Activated T-helper 1 cell treated with anti-CD3 and anti-CD28 coated beads, Interleukin-12 subunit alpha, Interleukin-12 subunit beta, Interleukin-2, Interleukin-4 antibody, amounts not matched to agents 30 ng/mL and 10 ng/mL and 1 ng/mL, durations not matched to agents 14 hours and 24 hours and 36 hours (primary cell): ENCODE measurements at regions of chr6 and their contacts with region 1.

Region 1: DNA sequence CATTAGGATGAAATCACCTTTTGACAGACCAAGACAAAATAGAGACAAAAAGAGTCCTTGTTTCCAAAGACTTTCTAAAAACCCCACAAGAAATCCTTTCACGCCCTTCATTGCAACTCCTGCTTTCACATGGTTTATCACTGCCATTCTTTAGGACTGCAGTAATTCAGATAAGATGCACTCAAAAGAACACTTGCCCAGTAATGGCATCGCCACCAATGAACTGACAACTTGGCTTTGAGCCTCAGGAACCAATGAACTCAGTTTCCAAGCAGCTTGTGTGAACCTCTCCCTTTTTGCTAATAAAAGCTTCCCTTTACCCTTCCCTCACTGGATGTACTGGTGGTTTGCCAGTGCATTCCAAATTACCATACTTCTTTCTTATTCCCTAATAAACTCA is 21.8 kb downstream of the OSTM1 start:
- DNase-seq: no peak
- H3K4me3 Mint-ChIP-seq: no peak overlapping the region
- H3K27ac Mint-ChIP-seq: no peak overlapping the region
- H3K4me1 Mint-ChIP-seq: no peaks in the 10 kb centered on the region
- H3K27me3 Mint-ChIP-seq: no peaks in the 10 kb centered on the region

Region 2: GRCh38 chr6:107318100-107318736 is 734.5 kb before region 1 on chr6:
- intact Hi-C with region 1: loop called (anchors 5 kb)
- DNase-seq: no peak
- H3K4me3 Mint-ChIP-seq: no peak overlapping the region
- H3K27ac Mint-ChIP-seq: no peak overlapping the region
- H3K4me1 Mint-ChIP-seq: peaks cover 14% of the 10 kb centered on the region
- H3K27me3 Mint-ChIP-seq: no peaks in the 10 kb centered on the region

Region 3: DNA sequence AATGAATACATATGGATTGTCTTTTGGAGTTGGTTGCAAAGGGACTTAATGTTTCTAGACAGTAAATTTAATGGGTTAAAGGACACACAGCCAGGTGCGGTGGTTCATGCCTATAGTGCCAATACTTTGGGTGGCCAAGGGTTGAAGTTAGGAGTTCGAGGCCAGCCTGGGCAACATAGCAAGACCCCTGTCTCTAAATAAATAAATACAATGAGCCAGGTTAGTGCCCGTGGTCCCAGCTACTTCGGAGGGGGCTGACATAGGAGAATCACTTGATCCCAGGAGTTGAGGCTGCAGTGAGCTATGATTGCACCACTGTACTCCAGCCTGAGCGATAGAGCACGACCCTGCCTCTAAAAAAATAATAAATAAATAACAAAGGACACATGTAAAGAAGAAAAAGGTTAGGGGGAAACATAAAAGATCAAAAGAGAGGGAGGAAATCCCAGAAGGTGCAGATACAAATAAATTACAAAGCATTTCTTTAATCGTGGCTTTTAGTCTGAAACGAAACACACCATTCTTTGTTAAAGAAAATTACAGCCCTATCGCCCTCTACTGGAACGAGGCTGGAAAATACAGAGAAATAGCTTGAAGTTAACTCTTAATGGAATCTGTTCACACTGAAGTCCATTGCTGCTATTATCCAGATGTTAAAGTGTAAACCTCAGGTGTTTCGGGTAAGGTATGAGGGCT is 186.0 kb before region 1 on chr6:
- intact Hi-C with region 1: loop called (anchors 2 kb)
- DNase-seq: no peak
- H3K4me3 Mint-ChIP-seq: no peak overlapping the region
- H3K27ac Mint-ChIP-seq: no peak overlapping the region
- H3K4me1 Mint-ChIP-seq: peaks cover 24% of the 10 kb centered on the region
- H3K27me3 Mint-ChIP-seq: peaks cover 4% of the 10 kb centered on the region

Region 4: GRCh38 chr6:107964671-107965340 is 87.9 kb before region 1 on chr6:
- intact Hi-C with region 1: loop called (anchors 5 kb)
- DNase-seq: no peak
- H3K4me3 Mint-ChIP-seq: no peak overlapping the region
- H3K27ac Mint-ChIP-seq: peak overlapping the region; percentile 58
- H3K4me1 Mint-ChIP-seq: peaks cover 8% of the 10 kb centered on the region
- H3K27me3 Mint-ChIP-seq: peaks cover 2% of the 10 kb centered on the region

Region 5: GRCh38 chr6:107977283-107977682 is 75.4 kb before region 1 on chr6:
- intact Hi-C with region 1: loop called (anchors 1 kb)
- DNase-seq: no peak
- H3K4me3 Mint-ChIP-seq: no peak overlapping the region
- H3K27ac Mint-ChIP-seq: no peak overlapping the region
- H3K4me1 Mint-ChIP-seq: no peaks in the 10 kb centered on the region
- H3K27me3 Mint-ChIP-seq: peaks cover 9% of the 10 kb centered on the region

Region 6: DNA sequence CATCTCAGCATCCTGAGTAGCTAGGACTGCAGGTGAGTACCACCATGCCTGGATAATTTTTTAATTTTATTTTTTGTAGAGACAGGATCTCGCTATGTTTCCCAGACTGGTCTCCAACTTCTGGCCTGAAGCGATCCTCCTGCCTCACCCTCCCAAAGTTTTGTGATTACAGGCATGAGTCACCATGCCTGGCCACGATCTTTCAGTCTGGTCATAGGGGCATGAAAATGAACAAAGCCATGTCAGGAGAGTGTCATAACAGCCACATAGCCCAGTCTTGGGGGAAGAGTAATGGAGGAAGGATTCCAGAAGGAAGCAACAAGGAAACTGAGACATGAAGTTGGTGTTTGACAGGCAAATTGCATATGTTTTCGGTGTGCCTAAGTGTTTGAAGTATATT is 225.1 kb after region 1 on chr6:
- intact Hi-C with region 1: no loop called
- DNase-seq: no peak
- H3K4me3 Mint-ChIP-seq: no peak overlapping the region
- H3K27ac Mint-ChIP-seq: no peak overlapping the region
- H3K4me1 Mint-ChIP-seq: no peaks in the 10 kb centered on the region
- H3K27me3 Mint-ChIP-seq: peaks cover 13% of the 10 kb centered on the region

Region 7: DNA sequence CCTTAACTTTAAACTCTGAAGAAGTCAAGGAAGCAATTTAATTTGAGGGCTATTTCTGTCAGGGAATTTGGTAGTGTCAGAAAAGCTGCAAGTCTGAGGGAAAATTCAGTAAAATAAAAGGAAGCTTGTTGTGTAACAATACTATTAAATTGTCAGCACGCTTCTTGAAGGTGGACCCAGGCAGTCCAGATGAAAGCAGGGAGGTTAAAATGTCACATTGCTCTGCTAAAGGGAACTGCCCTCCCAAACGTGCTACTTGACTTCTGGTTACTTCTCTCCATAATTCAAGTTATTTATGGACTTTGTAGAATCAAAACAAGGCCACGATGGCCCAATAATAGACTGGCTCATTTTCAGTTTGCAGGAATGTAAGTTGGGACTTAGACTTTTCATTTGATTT is 767.3 kb after region 1 on chr6:
- intact Hi-C with region 1: no loop called
- DNase-seq: no peak
- H3K4me3 Mint-ChIP-seq: no peak overlapping the region
- H3K27ac Mint-ChIP-seq: no peak overlapping the region
- H3K4me1 Mint-ChIP-seq: no peaks in the 10 kb centered on the region
- H3K27me3 Mint-ChIP-seq: peaks cover 23% of the 10 kb centered on the region

Region 8: GRCh38 chr6:109187399-109188114 is 1134.9 kb after region 1 on chr6:
- intact Hi-C with region 1: no loop called
- DNase-seq: peak; percentile 25
- H3K4me3 Mint-ChIP-seq: no peak overlapping the region
- H3K27ac Mint-ChIP-seq: no peak overlapping the region
- H3K4me1 Mint-ChIP-seq: no peaks in the 10 kb centered on the region
- H3K27me3 Mint-ChIP-seq: peaks cover 39% of the 10 kb centered on the region